ENCODE measurements at regions of chr4 and their contacts with region 1.

Region 1: DNA sequence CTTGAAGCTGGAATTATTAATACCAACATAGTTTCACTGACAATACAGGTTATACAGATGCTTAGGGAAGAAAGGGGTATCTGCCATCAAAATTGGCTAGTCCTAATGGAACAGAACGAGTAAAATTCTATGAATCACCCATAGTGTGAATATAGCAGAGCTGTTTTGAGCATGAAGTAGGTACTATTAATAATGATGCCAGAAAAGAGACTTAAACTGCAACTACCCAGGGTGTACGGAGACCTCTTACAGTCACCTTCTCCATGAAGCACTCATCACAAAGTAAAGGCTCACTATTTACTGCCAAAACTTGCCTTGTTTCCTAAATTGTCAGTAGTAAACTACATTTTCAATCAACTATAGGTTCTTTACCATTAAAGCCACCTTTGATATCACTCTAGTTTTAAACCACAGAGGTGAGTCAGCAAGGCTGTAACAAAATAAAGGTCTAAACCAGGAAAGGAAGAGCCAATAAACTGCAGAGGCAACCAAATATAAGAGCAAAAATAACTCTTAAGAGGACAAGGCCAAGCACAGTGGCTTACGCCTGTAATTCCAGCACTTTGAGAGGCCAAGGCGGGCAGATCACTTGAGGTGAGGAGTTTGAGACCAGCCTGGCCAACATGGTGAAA is 114.4 kb downstream of the FRYL start:
- DNase-seq: no peak
- H3K4me3 Mint-ChIP-seq: no peak overlapping the region
- H3K27ac Mint-ChIP-seq: no peak overlapping the region
- H3K4me1 Mint-ChIP-seq: peaks cover 27% of the 10 kb centered on the region
- H3K27me3 Mint-ChIP-seq: no peaks in the 10 kb centered on the region

Region 2: GRCh38 chr4:48635310-48635709 is 30.4 kb before region 1 on chr4:
- CTCF ChIA-PET with region 1: interaction called, 3 read pairs
- intact Hi-C with region 1: loop called (anchors 2 kb)
- DNase-seq: peak; percentile 53
- H3K4me3 Mint-ChIP-seq: no peak overlapping the region
- H3K27ac Mint-ChIP-seq: no peak overlapping the region
- H3K4me1 Mint-ChIP-seq: peaks cover 11% of the 10 kb centered on the region
- H3K27me3 Mint-ChIP-seq: no peaks in the 10 kb centered on the region

Region 3: GRCh38 chr4:48653217-48654014 is 12.3 kb before region 1 on chr4:
- CTCF ChIA-PET with region 1: interaction called, 4 read pairs
- intact Hi-C with region 1: loop called (anchors 1 kb)
- DNase-seq: peak; percentile 36
- H3K4me3 Mint-ChIP-seq: no peak overlapping the region
- H3K27ac Mint-ChIP-seq: no peak overlapping the region
- H3K4me1 Mint-ChIP-seq: peaks cover 39% of the 10 kb centered on the region
- H3K27me3 Mint-ChIP-seq: no peaks in the 10 kb centered on the region

Measured in activated naive CD4-positive, alpha-beta T cell treated with anti-CD3 and anti-CD28 coated beads for 36 hours (primary cell).